Caco-2 (cell line): ENCODE measurements at regions of chr12 and their contacts with region 1.

Region 1: GRCh38 chr12:10372534-10372931 is 17.3 kb downstream of the KLRK1 start:
- DNase-seq: peak; percentile 52 to 61
- H3K4me3 ChIP-seq: no peak overlapping the region
- H3K4me3 Mint-ChIP-seq: peak overlapping the region; percentile 62
- H3K27ac Mint-ChIP-seq: peak overlapping the region; percentile 52
- H3K4me1 ChIP-seq: peaks cover 27% of the 10 kb centered on the region
- H3K4me1 Mint-ChIP-seq: peaks cover 40% of the 10 kb centered on the region
- H3K27me3 ChIP-seq: no peaks in the 10 kb centered on the region
- H3K27me3 Mint-ChIP-seq: no peaks in the 10 kb centered on the region
- CTCF ChIP-seq: no peak

Region 2: DNA sequence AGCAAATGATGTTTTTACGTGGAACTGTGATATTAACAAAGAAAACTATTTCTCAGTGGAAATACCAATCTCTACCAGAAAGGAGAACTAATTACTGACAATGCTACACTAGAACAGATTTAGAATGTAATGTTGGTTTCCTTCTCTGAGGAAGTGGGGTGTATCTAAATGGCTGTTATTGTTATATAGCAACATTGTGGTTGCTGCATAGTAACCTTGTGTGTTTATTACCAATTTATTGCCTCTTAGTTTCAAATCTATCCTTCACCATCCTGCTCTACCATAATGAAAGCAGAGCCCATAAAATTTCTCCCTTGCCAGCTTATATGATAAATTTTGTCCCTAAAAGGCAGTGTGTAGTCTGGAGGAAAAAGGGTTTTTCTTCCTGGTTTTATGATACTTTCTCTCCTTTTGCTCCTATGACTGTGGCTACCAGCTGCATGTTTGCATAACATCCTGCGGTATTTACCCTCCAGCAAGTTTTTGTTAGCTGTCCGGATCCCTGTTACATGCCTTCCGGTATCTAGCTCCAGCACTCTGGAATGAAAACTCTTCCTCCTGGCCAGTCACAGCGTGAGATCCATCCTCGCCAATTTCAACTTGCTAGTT is 23.0 kb after region 1 on chr12:
- CTCF ChIA-PET with region 1: no interaction called
- POLR2A ChIA-PET with region 1: no interaction called
- intact Hi-C with region 1: loop called (anchors 1 kb)
- DNase-seq: peak; percentile 85 to 88
- H3K4me3 ChIP-seq: no peak overlapping the region
- H3K4me3 Mint-ChIP-seq: peak overlapping the region; percentile 63
- H3K27ac Mint-ChIP-seq: peak overlapping the region; percentile 95
- H3K4me1 ChIP-seq: peaks cover 12% of the 10 kb centered on the region
- H3K4me1 Mint-ChIP-seq: peaks cover 21% of the 10 kb centered on the region
- H3K27me3 ChIP-seq: no peaks in the 10 kb centered on the region
- H3K27me3 Mint-ChIP-seq: no peaks in the 10 kb centered on the region
- CTCF ChIP-seq: no peak